BJ (cell line): ENCODE measurements at regions of chr1 and their contacts with region 1.

Region 1: GRCh38 chr1:159798893-159799292 is 3.3 kb upstream of the FCRL6 start:
- DNase-seq: peak; percentile 36
- H3K4me3 ChIP-seq: no peak overlapping the region
- H3K27me3 ChIP-seq: peaks cover 11% of the 10 kb centered on the region
- CTCF ChIP-seq: peak; percentile 77

Region 2: GRCh38 chr1:159132271-159132881 is 666.5 kb before region 1 on chr1:
- CTCF ChIA-PET with region 1: interaction called, 13 read pairs
- POLR2A ChIA-PET with region 1: no interaction called
- DNase-seq: no peak
- H3K4me3 ChIP-seq: no peak overlapping the region
- H3K27me3 ChIP-seq: peaks cover 1% of the 10 kb centered on the region; the same call in 1 of the 2 replicates
- CTCF ChIP-seq: peak; percentile 93

Region 3: GRCh38 chr1:159817276-159818041 is 18.6 kb after region 1 on chr1:
- CTCF ChIA-PET with region 1: interaction called, 16 read pairs
- POLR2A ChIA-PET with region 1: no interaction called
- DNase-seq: no peak
- H3K4me3 ChIP-seq: no peak overlapping the region
- H3K27me3 ChIP-seq: peaks cover 18% of the 10 kb centered on the region
- CTCF ChIP-seq: no peak

Region 4: GRCh38 chr1:159851407-159851806 is 52.5 kb after region 1 on chr1:
- CTCF ChIA-PET with region 1: interaction called, 11 read pairs
- POLR2A ChIA-PET with region 1: no interaction called
- DNase-seq: no peak
- H3K4me3 ChIP-seq: no peak overlapping the region
- H3K27me3 ChIP-seq: no peaks in the 10 kb centered on the region
- CTCF ChIP-seq: no peak

Region 5: DNA sequence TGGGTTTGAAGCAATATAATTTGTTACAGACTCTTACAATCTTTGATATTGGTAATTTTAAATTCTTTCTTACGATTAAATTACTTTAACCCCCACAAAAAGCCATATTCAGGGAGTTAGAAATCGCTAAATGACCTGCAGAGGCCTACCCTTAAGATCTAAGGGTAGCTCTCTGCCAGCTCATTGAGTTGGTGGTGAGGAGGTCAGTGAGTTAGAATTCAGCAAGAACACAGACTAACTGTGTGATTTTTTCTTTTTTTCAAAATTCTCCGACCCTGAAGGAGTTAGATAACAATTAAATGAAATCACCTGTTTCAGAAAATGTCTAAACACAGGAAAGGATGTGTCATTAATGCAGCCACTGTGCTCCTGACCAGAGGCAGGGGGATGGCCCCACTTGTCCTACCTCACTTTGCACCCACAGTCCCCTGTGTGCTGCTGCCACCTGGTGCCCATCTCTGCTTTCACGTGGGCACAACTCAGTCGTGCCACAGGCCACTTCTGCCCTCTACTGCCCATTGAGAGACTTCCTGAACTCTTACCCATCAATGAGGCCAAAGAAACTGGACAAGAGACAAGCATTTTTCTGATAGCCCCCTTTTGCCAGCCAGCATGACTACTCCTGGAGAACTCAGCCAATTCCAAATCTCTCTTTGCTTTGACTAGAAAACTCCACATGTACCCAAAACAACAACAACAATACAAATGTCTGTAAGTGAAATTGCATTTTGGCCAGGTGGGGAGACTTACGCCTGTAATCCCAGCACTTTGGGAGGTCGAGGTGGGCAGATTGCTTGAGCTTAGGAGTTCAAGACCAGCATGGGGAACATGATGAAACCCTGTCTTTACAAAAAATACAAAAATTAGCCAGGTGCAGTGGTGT is 92.6 kb after region 1 on chr1:
- CTCF ChIA-PET with region 1: interaction called, 590 read pairs
- POLR2A ChIA-PET with region 1: interaction called, 9 read pairs
- DNase-seq: peak; percentile 50
- H3K4me3 ChIP-seq: no peak overlapping the region
- H3K27me3 ChIP-seq: no peaks in the 10 kb centered on the region
- CTCF ChIP-seq: peak; percentile 97

Region 6: GRCh38 chr1:159936273-159936904 is 137.5 kb after region 1 on chr1:
- CTCF ChIA-PET with region 1: interaction called, 12 read pairs
- POLR2A ChIA-PET with region 1: no interaction called
- DNase-seq: no peak
- H3K4me3 ChIP-seq: no peak overlapping the region
- H3K27me3 ChIP-seq: peaks cover 4% of the 10 kb centered on the region
- CTCF ChIP-seq: peak; percentile 96

Region 7: GRCh38 chr1:160768295-160768657 is 969.4 kb after region 1 on chr1:
- CTCF ChIA-PET with region 1: no interaction called
- POLR2A ChIA-PET with region 1: no interaction called
- DNase-seq: no peak
- H3K4me3 ChIP-seq: no peak overlapping the region
- H3K27me3 ChIP-seq: no peaks in the 10 kb centered on the region; the same call in 1 of the 2 replicates
- CTCF ChIP-seq: peak; percentile 37